ENCODE measurements at regions of chr1 and their contacts with region 1.

Region 1: GRCh38 chr1:175154629-175155472 is 37.7 kb downstream of the KIAA0040 start:
- DNase-seq: peak; percentile 70 to 77
- H3K4me3 ChIP-seq: no peak overlapping the region
- H3K4me3 Mint-ChIP-seq: no peak overlapping the region
- H3K27ac Mint-ChIP-seq: no peak overlapping the region
- H3K4me1 ChIP-seq: no peaks in the 10 kb centered on the region; the same call in 1 of the 2 replicates
- H3K4me1 Mint-ChIP-seq: peaks cover 8% of the 10 kb centered on the region
- H3K27me3 ChIP-seq: no peaks in the 10 kb centered on the region
- H3K27me3 Mint-ChIP-seq: peaks cover 6% of the 10 kb centered on the region
- CTCF ChIP-seq: peak; percentile 91 to 93

Region 2: DNA sequence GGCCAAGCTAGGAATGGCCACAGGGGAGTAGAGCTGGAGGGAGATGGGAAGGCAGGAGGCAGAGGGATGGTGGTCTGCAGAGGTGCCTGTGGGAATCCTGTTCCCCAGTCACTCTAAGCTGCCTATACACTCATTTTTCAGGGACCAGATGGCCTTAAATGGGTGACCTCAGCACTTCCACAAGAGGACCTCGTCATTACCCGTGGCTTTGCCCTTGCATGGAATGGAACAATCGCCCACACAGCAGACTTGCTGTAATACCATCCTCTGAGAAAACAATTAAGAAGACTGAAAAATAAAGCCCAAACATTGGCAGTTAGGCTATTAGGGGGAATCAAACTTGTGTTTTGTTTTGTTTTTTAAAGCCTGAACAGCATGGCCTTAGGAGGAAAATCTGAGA is 100.1 kb before region 1 on chr1:
- CTCF ChIA-PET with region 1: no interaction called
- POLR2A ChIA-PET with region 1: no interaction called
- intact Hi-C with region 1: no loop called
- DNase-seq: no peak
- H3K4me3 ChIP-seq: no peak overlapping the region
- H3K4me3 Mint-ChIP-seq: no peak overlapping the region
- H3K27ac Mint-ChIP-seq: no peak overlapping the region
- H3K4me1 ChIP-seq: no peaks in the 10 kb centered on the region
- H3K4me1 Mint-ChIP-seq: no peaks in the 10 kb centered on the region
- H3K27me3 ChIP-seq: no peaks in the 10 kb centered on the region
- H3K27me3 Mint-ChIP-seq: peaks cover 13% of the 10 kb centered on the region
- CTCF ChIP-seq: no peak

Region 3: GRCh38 chr1:175095978-175096607 is 58.8 kb before region 1 on chr1:
- CTCF ChIA-PET with region 1: no interaction called
- POLR2A ChIA-PET with region 1: no interaction called
- intact Hi-C with region 1: no loop called
- DNase-seq: peak; percentile 64 to 78
- H3K4me3 ChIP-seq: no peak overlapping the region
- H3K4me3 Mint-ChIP-seq: peak overlapping the region; percentile 4
- H3K27ac Mint-ChIP-seq: peak overlapping the region; percentile 64
- H3K4me1 ChIP-seq: peaks cover 21% of the 10 kb centered on the region
- H3K4me1 Mint-ChIP-seq: peaks cover 15% of the 10 kb centered on the region
- H3K27me3 ChIP-seq: no peaks in the 10 kb centered on the region
- H3K27me3 Mint-ChIP-seq: no peaks in the 10 kb centered on the region
- CTCF ChIP-seq: no peak

Region 4: GRCh38 chr1:175124861-175125260 is 30.0 kb before region 1 on chr1:
- CTCF ChIA-PET with region 1: interaction called, 18 read pairs
- POLR2A ChIA-PET with region 1: no interaction called
- intact Hi-C with region 1: no loop called
- DNase-seq: no peak
- H3K4me3 ChIP-seq: no peak overlapping the region
- H3K4me3 Mint-ChIP-seq: no peak overlapping the region
- H3K27ac Mint-ChIP-seq: no peak overlapping the region
- H3K4me1 ChIP-seq: peaks cover 9% of the 10 kb centered on the region
- H3K4me1 Mint-ChIP-seq: no peaks in the 10 kb centered on the region
- H3K27me3 ChIP-seq: no peaks in the 10 kb centered on the region
- H3K27me3 Mint-ChIP-seq: peaks cover 2% of the 10 kb centered on the region
- CTCF ChIP-seq: no peak

Region 5: DNA sequence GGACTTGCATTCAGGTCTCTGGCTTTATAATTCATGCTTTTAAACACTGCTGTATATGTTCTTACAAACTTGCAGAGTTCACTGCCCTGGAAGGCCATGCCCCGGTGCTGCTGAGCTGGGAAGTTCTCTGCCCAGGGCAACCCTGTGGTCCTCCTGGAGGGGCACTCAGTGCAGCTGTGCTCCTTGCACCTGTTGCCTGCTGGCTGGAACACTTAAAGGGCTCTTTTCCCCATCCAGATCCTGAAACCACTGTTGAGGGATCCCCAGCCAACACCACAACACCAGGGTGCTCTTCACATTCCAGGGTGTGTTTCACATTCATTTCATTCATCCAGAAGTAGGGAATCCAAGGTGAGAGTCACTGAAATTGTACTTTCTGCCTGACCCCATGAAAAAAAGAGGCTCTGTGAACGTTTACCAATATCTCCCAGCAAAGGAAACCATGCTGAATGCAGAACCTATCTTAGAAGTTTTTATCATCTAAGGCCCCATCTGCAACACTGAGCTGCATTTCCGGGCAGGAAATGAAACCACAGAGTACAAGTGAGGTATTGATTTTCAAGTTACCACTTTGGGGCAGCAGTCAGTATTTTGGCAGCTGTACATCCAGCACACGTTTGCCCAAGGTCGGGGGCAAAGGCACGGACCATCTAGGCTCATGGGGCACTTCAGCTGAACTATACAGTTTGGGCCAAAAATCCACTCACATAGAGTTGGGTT is 54.1 kb after region 1 on chr1:
- CTCF ChIA-PET with region 1: no interaction called
- POLR2A ChIA-PET with region 1: no interaction called
- intact Hi-C with region 1: no loop called
- DNase-seq: no peak
- H3K4me3 ChIP-seq: no peak overlapping the region
- H3K4me3 Mint-ChIP-seq: no peak overlapping the region
- H3K27ac Mint-ChIP-seq: no peak overlapping the region
- H3K4me1 ChIP-seq: no peaks in the 10 kb centered on the region
- H3K4me1 Mint-ChIP-seq: no peaks in the 10 kb centered on the region
- H3K27me3 ChIP-seq: no peaks in the 10 kb centered on the region
- H3K27me3 Mint-ChIP-seq: no peaks in the 10 kb centered on the region
- CTCF ChIP-seq: no peak

Region 6: DNA sequence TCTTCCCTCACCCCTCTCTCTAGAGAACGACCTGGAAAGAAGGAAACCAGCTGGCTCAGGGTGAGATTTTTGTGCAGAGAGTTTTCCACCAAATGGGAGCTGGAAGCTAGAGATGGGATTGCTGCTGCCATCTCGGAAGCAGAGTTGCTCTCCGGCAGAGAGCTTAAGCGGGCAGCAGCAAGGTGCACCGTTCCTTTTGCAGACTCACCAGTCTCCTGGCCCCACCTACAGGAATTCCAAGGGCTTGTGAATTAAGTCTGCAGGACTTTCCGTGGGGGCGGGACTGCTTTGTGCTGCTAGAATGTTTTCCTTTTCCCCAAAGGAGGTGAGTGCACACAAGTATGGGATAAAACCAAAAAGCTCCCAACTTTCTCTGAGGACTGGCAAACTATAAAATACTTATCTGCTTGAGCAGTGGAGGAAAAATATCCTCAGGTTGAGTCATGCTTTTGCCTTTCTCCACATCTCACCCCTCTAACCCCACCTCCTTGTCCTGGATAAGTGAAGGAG is 66.9 kb after region 1 on chr1:
- CTCF ChIA-PET with region 1: interaction called, 4 read pairs
- POLR2A ChIA-PET with region 1: no interaction called
- intact Hi-C with region 1: loop called (anchors 1 kb)
- DNase-seq: peak; percentile 12 to 48
- H3K4me3 ChIP-seq: no peak overlapping the region
- H3K4me3 Mint-ChIP-seq: no peak overlapping the region
- H3K27ac Mint-ChIP-seq: no peak overlapping the region
- H3K4me1 ChIP-seq: 0 out of 2 replicates have a peak, but pooled peaks cover 5% of the 10 kb centered on the region
- H3K4me1 Mint-ChIP-seq: peaks cover 26% of the 10 kb centered on the region
- H3K27me3 ChIP-seq: no peaks in the 10 kb centered on the region
- H3K27me3 Mint-ChIP-seq: no peaks in the 10 kb centered on the region
- CTCF ChIP-seq: peak in 1 of 2 experiments; percentile 15

Region 7: DNA sequence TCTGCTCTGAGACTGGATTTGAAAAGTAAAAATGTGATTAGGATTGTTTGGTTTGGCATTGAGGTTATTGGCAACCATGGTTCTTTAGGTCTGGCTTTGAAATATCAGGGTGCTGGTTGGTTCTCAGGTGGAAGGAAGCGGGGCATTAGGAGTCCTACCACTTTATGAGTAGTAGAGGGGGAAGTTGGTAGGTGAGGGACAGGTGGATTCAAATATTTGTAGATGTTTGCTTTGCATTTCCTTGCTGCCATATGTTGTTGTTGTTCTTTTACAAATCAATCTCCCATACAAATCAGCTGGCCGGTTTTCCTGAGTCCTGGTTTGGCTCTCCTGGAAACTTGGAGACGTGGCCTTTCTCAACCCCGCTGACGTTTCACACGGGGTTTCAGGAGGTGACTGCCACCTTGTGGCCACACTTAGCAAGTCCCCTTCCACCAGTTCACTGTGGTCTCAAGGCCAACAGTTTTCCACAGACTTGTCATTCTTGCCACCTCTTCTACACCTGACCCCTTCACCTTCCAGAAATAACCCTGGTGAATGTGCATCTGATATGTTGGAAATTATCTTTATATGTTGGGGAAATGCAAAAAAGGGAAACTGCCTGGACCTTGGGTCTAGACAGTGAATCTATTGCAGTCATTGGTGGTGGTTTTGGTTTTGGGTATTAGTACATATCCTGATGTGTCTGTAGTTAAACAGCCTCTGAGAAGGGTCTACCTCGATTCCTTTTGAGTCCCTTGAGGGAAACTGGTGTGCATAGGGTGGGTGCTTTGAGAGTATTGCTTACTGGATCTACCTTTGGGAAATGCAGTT is 164.8 kb after region 1 on chr1:
- CTCF ChIA-PET with region 1: interaction called, 49 read pairs
- POLR2A ChIA-PET with region 1: no interaction called
- intact Hi-C with region 1: loop called (anchors 1 kb)
- DNase-seq: peak; percentile 75 to 79
- H3K4me3 ChIP-seq: no peak overlapping the region
- H3K4me3 Mint-ChIP-seq: no peak overlapping the region
- H3K27ac Mint-ChIP-seq: peak overlapping the region; percentile 48
- H3K4me1 ChIP-seq: peaks cover 13% of the 10 kb centered on the region; the same call in 1 of the 2 replicates
- H3K4me1 Mint-ChIP-seq: peaks cover 6% of the 10 kb centered on the region
- H3K27me3 ChIP-seq: no peaks in the 10 kb centered on the region
- H3K27me3 Mint-ChIP-seq: no peaks in the 10 kb centered on the region
- CTCF ChIP-seq: peak; percentile 80 to 86

Region 8: DNA sequence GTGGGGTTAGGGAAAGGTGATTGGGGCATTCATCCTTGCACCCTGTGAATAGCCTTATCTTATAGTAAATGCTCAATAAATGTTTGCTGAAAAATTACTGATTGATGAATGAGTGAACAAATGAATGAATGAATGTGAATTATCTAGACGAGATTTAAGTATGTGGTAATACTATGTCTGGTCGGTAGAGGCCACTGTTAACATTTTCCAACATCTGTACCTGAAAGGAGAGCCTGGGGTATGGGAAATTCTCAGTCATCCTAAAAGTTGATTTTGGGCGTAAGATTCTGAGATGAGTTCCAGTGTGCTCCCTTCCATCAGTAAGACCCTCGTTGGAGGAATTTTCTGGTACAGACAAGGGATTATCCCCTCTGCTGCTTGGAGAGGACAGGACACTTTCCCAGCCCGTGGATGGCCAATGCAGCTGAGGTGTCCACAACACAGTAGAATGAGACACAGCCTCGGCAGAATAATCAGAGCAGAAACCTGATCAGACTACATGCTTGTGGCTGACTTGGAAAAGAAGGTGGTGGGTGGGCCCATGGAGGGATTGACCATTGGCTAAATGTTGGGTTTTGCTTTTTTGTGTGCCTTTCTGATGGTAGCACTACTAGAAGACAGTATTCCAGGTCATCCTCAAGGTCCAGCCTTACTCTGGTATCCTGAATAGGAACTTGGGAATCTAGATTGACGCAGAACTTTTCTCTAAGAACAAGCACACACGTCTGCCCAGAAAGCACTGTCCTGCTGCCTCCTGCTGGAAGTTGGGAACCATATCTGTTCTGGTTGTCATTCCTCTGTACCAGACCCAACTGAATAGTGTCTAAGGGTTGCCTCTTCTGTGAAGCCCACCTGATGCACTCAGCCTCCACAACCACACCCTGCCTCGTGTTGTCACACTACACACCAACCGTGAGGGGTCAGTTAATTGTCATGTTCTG is 326.5 kb after region 1 on chr1:
- CTCF ChIA-PET with region 1: interaction called, 3 read pairs
- POLR2A ChIA-PET with region 1: no interaction called
- intact Hi-C with region 1: loop called (anchors 5 kb)
- DNase-seq: peak in 1 of 2 experiments; percentile 24
- H3K4me3 ChIP-seq: no peak overlapping the region
- H3K4me3 Mint-ChIP-seq: no peak overlapping the region
- H3K27ac Mint-ChIP-seq: no peak overlapping the region
- H3K4me1 ChIP-seq: no peaks in the 10 kb centered on the region
- H3K4me1 Mint-ChIP-seq: no peaks in the 10 kb centered on the region
- H3K27me3 ChIP-seq: no peaks in the 10 kb centered on the region; the same call in 1 of the 2 replicates
- H3K27me3 Mint-ChIP-seq: peaks cover 17% of the 10 kb centered on the region
- CTCF ChIP-seq: peak; percentile 48 to 53

Region 9: DNA sequence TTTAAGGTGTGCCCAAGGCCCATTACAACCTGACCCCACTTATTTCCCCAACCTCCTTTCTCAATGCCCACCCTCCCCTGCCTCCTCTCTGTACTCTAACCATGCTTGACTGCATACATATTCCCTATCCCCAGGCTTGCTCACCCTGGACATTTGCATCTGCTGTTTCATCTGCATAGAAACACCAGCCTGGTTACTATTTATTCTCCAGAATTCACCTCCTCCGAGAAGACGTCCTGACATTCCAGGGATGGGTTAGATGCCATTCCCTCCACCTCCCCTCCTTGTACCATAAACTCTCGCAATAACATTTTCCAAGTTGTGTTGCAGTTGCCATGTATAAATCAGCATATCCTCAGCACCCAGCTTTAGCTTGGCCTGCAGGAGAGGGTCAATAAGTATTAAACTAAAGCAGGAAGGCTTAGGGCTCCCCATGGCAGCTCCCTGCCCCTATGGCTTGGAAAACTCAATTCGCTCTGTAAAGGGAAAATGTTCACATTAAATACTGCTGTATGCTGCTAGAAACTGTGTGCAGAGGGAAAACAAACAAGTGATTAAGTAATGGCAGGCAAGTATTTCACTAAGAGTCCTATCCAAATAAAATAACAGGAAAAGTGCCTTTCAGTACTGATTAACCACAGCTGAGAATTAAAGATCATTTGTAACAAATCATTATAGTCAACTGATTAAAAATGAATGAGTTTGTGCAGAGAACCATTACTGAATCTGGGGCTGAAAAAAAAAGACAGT is 386.2 kb after region 1 on chr1:
- CTCF ChIA-PET with region 1: no interaction called
- POLR2A ChIA-PET with region 1: no interaction called
- intact Hi-C with region 1: no loop called
- DNase-seq: peak in 1 of 2 experiments; percentile 1
- H3K4me3 ChIP-seq: no peak overlapping the region
- H3K4me3 Mint-ChIP-seq: no peak overlapping the region
- H3K27ac Mint-ChIP-seq: no peak overlapping the region
- H3K4me1 ChIP-seq: no peaks in the 10 kb centered on the region
- H3K4me1 Mint-ChIP-seq: no peaks in the 10 kb centered on the region
- H3K27me3 ChIP-seq: no peaks in the 10 kb centered on the region; the same call in 1 of the 2 replicates
- H3K27me3 Mint-ChIP-seq: peaks cover 34% of the 10 kb centered on the region
- CTCF ChIP-seq: no peak

Region 10: GRCh38 chr1:176073524-176074157 is 918.8 kb after region 1 on chr1:
- CTCF ChIA-PET with region 1: no interaction called
- POLR2A ChIA-PET with region 1: no interaction called
- intact Hi-C with region 1: loop called (anchors 5 kb)
- DNase-seq: peak; percentile 48 to 71
- H3K4me3 ChIP-seq: no peak overlapping the region
- H3K4me3 Mint-ChIP-seq: no peak overlapping the region
- H3K27ac Mint-ChIP-seq: no peak overlapping the region
- H3K4me1 ChIP-seq: peaks cover 20% of the 10 kb centered on the region
- H3K4me1 Mint-ChIP-seq: peaks cover 13% of the 10 kb centered on the region
- H3K27me3 ChIP-seq: no peaks in the 10 kb centered on the region
- H3K27me3 Mint-ChIP-seq: no peaks in the 10 kb centered on the region
- CTCF ChIP-seq: peak; percentile 56 to 67

Measured in Caco-2 (cell line).